ENCODE measurements at regions of chr4 and their contacts with region 1.

Region 1: DNA sequence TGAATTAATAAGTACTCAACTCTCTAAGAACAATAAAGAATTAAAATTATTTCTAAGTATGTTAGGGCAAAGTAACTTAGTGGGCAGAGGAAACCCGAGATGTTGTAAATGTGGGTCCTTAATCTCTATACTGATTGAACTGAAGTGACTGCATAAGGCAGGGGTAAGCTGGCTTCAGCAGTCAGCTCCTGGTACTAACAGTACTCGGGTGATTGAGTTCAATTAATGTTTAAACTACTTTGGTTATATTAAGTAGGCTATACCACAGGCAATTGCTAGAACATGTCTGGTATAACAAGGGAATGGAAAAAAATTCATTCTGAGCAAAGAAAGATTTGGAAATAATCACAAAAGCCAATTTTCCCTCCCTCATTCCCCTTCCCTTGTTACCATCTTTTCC is 90.7 kb downstream of the LNX1 start:
- DNase-seq: no peak
- ATAC-seq: no peak
- H3K4me3 ChIP-seq: no peak overlapping the region
- H3K27ac ChIP-seq: no peak overlapping the region
- H3K4me1 ChIP-seq: no peaks in the 10 kb centered on the region
- H3K27me3 ChIP-seq: no peaks in the 10 kb centered on the region
- CTCF ChIP-seq: no peak

Region 2: GRCh38 chr4:53520116-53520515 is 19.6 kb after region 1 on chr4:
- CTCF ChIA-PET with region 1: interaction called, 10 read pairs
- POLR2A ChIA-PET with region 1: no interaction called
- in situ Hi-C with region 1: no loop called
- intact Hi-C with region 1: no loop called
- DNase-seq: no peak
- ATAC-seq: no peak
- H3K4me3 ChIP-seq: no peak overlapping the region
- H3K27ac ChIP-seq: no peak overlapping the region
- H3K4me1 ChIP-seq: no peaks in the 10 kb centered on the region
- H3K27me3 ChIP-seq: no peaks in the 10 kb centered on the region
- CTCF ChIP-seq: no peak

Measured in Panc1 (cell line).